ENCODE measurements at regions of chr10 and their contacts with region 1.

Region 1: GRCh38 chr10:101031128-101031795 is at the starts of genes PDZD7 and SFXN3:
- DNase-seq: peak; percentile 48
- ATAC-seq: peak; percentile 96
- H3K4me3 ChIP-seq: peak within 1 kb of the TSS; percentile 64
- H3K27ac ChIP-seq: no peak within 1 kb of the TSS
- H3K4me1 ChIP-seq: peaks cover 21% of the 10 kb centered on the region
- H3K27me3 ChIP-seq: peaks cover 5 to 9% of the 10 kb centered on the region in 2 experiments
- CTCF ChIP-seq: no peak
- EP300 ChIP-seq: no peak
- POLR2A ChIP-seq: no peak
- RAD21 ChIP-seq: no peak
- polyA plus RNA-seq, gene PDZD7: not detected
- polyA plus RNA-seq, gene SFXN3: 0.05 to 0.44 TPM

Region 2: DNA sequence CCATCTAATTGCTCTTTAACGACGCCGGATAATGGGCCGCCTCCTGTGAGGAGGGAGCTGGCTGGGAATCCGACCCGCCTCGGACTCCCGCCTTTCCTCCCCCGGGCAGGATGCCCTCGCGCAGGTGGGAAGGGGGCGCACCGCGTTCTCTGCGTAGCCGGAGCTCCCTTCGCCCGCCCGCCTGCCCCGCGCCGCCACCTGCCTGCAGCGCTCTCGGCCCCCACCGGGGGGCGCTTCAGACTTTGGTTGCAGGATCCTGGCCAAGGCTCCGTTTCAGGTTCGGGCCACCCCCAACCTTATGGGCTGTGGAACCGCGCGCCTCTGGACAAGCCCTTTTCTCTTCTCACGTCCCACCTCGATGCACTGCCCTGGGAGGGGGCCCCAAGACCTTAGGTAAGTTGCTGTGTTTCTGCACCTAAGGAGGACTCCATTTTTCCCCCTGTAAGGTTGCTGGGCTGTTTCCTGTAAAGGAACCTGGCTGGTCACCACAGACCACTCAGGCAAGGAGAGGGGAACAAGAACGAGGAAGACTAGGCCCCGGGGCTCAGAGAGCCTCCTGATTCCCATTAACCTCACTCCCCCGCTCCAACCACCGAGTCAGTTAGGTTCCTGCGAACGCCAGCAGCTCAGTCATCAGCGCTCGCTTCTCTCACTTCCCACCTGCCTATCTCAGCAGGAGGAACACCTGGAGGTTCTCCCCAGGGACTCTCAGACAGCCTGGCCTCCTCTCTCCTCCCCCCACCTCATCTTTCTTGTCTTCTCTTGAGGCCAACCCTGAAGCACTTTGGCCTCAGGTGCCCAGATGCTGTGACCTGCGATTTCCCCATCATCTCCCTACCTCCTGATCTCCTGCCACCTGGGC is 19.2 kb after region 1 on chr10:
- CTCF ChIA-PET with region 1: interaction called, 23 read pairs
- POLR2A ChIA-PET with region 1: interaction called, 3 read pairs
- RAD21 ChIA-PET with region 1: interaction called, 7 read pairs
- SMC1A ChIA-PET with region 1: no interaction called
- in situ Hi-C with region 1: no loop called
- intact Hi-C with region 1: no loop called
- DNase-seq: no peak
- ATAC-seq: peak; percentile 97
- H3K4me3 ChIP-seq: peak overlapping the region; percentile 56; the same call in 1 of the 2 replicates
- H3K27ac ChIP-seq: no peak overlapping the region
- H3K4me1 ChIP-seq: peaks cover 8% of the 10 kb centered on the region
- H3K27me3 ChIP-seq: peaks cover 0 to 1% of the 10 kb centered on the region in 2 experiments; a peak in 2 of 4 replicates
- CTCF ChIP-seq: peak; percentile 85 to 88 (median 87)
- EP300 ChIP-seq: no peak
- POLR2A ChIP-seq: no peak
- RAD21 ChIP-seq: peak; percentile 65

Region 3: DNA sequence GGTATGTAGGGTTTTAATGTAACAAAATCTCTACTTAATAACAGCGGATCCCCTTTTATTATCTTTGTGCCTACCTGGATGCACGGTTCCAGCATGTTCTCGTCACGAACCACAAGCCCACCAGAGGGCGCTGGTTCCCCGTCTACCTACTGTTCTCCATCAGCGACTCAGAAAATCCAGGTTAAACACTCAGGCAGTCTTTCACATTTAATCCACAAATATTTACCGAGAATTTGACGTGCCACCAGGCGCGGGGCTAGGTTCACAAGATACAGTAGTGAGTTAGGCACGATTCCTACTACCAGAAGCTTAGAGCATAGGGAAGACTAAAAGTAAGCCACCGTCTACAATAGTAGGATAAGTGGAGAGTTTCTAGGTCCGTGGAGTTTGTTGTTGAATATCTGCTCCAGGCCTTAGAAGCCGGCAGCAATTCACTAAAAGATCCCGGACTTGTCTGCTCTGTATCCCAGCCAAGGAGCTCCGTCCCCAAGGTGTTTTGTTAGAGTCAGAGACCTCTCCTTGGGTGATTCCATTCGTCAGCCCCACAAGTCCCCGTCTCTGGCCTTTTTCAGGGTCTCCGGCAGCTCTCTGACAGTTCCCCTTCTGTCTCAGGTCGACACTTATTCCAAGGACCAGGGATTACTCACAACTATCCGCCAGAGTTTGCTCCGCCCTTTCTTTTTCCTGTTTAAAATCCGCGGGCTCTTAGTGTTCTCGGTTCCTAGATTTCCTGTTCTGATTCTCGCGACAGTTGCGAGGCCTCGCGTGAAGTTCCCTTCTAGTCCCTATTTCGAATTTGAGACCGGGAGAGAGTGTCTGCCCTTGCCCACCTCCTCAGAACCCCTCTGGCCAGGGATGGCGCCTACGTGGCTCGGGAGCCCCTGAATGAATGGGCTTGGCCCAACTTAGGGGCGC is 29.0 kb after region 1 on chr10:
- CTCF ChIA-PET with region 1: interaction called, 12 read pairs
- POLR2A ChIA-PET with region 1: interaction called, 7 read pairs
- RAD21 ChIA-PET with region 1: no interaction called
- SMC1A ChIA-PET with region 1: interaction called, 3 read pairs
- in situ Hi-C with region 1: no loop called
- intact Hi-C with region 1: loop called (anchors 5 kb)
- DNase-seq: peak; percentile 81
- ATAC-seq: peak; percentile 54
- H3K4me3 ChIP-seq: peak overlapping the region; percentile 95
- H3K27ac ChIP-seq: peak overlapping the region; percentile 98
- H3K4me1 ChIP-seq: peaks cover 31% of the 10 kb centered on the region
- H3K27me3 ChIP-seq: peaks cover 0 to 3% of the 10 kb centered on the region in 2 experiments; a peak in 1 of 4 replicates
- CTCF ChIP-seq: peak; percentile 87 to 92 (median 92)
- EP300 ChIP-seq: no peak
- POLR2A ChIP-seq: no peak; the same call in 1 of the 2 replicates
- RAD21 ChIP-seq: peak; percentile 83

Region 4: DNA sequence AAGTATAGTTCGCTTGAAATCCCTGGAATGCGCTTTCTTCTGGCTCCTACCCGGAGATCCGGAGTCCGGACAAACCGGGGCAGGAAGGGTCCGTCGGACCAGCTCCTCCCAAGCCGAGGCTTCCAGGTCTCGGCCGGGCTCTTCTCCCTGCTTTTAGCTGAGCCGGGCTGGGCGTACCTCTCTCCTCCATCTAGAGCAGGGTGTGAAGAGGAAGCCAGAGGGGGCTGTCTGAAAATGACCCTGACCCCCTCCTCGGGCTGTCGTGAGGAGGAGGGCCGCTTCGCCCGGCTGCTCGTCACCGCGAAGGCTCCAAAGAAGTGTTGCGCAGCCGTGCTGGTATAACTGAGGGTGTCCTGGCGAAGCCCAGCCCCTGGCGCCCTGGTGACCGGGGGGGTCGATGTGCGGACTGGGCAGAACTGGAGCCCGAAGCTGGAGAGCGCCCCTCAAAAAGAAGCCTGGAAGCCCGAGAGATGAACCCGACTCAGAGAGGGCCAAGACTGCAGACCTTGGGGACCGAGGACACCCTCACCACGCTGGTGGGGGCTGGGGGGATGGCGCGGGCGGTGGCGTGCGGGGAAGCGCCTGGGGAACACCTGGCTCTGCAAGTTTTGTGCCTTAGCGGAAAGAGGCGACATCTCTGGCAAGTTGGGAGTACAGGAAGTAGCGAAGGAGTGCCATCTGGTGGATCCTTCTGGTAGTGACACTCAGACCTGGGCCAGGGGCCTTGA is 36.3 kb after region 1 on chr10:
- CTCF ChIA-PET with region 1: interaction called, 6 read pairs
- POLR2A ChIA-PET with region 1: interaction called, 3 read pairs
- RAD21 ChIA-PET with region 1: interaction called, 3 read pairs
- SMC1A ChIA-PET with region 1: interaction called, 4 read pairs
- in situ Hi-C with region 1: no loop called
- intact Hi-C with region 1: loop called (anchors 5 kb)
- DNase-seq: peak; percentile 44
- ATAC-seq: peak; percentile 74
- H3K4me3 ChIP-seq: peak overlapping the region; percentile 87
- H3K27ac ChIP-seq: no peak overlapping the region
- H3K4me1 ChIP-seq: peaks cover 41% of the 10 kb centered on the region
- H3K27me3 ChIP-seq: peaks cover 2 to 3% of the 10 kb centered on the region in 2 experiments; a peak in 1 of 4 replicates
- CTCF ChIP-seq: peak; percentile 81 to 89 (median 82)
- EP300 ChIP-seq: no peak
- POLR2A ChIP-seq: no peak
- RAD21 ChIP-seq: peak; percentile 73